Mammary epithelial cell (primary cell): ENCODE measurements at regions of chr16 and their contacts with region 1.

Region 1: GRCh38 chr16:22190776-22191531 is 15.1 kb upstream of the EEF2K start:
- DNase-seq: peak; percentile 99
- H3K4me3 ChIP-seq: peak overlapping the region; percentile 48 to 66 (median 56)
- H3K27ac ChIP-seq: peak overlapping the region; percentile 94
- H3K4me1 ChIP-seq: peaks cover 35% of the 10 kb centered on the region
- H3K27me3 ChIP-seq: no peaks in the 10 kb centered on the region
- CTCF ChIP-seq: no peak

Region 2: GRCh38 chr16:21656795-21657768 is 533.9 kb before region 1 on chr16:
- CTCF ChIA-PET with region 1: no interaction called
- dilution Hi-C with region 1: no loop called
- in situ Hi-C with region 1: no loop called
- intact Hi-C with region 1: loop called (anchors 10 kb)
- DNase-seq: peak; percentile 30
- H3K4me3 ChIP-seq: no peak overlapping the region
- H3K27ac ChIP-seq: no peak overlapping the region
- H3K4me1 ChIP-seq: peaks cover 23% of the 10 kb centered on the region
- H3K27me3 ChIP-seq: no peaks in the 10 kb centered on the region
- CTCF ChIP-seq: peak; percentile 69 to 85

Region 3: GRCh38 chr16:22001591-22001990 is 189.4 kb before region 1 on chr16:
- CTCF ChIA-PET with region 1: interaction called, 8 read pairs
- dilution Hi-C with region 1: loop called (anchors 5 kb)
- in situ Hi-C with region 1: loop called (anchors 5 to 10 kb)
- intact Hi-C with region 1: loop called (anchors 1 kb)
- DNase-seq: peak; percentile 70
- H3K4me3 ChIP-seq: no peak overlapping the region
- H3K27ac ChIP-seq: peak overlapping the region; percentile 51
- H3K4me1 ChIP-seq: peaks cover 33% of the 10 kb centered on the region
- H3K27me3 ChIP-seq: no peaks in the 10 kb centered on the region
- CTCF ChIP-seq: no peak

Region 4: DNA sequence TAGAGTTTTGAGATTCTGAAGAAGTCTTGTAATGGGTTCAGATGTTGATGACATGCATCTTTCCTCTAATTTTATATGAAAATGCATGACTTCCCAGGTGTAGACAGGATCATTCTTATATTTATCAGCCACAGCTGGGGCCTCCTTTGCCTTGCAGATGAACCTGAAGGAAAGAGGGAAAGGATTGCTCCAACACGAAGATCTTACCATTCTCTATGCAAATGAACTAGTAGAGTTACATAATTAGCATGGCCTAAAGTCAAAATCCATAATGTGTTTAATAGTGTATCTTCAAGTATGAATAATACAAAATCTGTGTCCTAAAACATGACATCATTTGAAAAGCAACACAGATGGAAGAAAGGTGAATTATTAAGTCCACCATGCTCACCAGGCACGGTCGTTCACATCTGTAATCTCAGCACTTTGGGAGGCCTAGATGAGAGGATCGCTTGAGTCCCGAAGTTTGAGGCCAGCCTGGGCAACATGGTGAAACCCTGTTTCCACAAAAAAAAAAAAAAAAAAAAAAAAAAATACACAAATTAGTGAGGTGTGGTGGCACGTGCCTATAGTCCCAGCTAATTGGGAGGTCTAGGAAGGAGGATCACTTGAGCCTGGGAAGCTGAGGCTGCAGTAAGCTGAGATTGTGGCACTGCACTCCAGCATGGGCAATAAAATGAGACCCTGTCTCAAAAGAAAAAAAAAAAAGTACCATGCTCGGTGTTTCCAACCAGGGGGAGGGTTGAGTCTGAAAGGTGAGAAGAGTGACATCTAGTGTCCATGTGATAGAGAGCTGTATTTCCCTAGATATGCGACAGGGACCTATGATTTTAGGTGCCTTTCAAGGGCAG is 92.3 kb before region 1 on chr16:
- CTCF ChIA-PET with region 1: interaction called, 12 read pairs
- dilution Hi-C with region 1: loop called (anchors 5 kb)
- in situ Hi-C with region 1: loop called in 1 of 2 experiments (anchors 5 kb)
- intact Hi-C with region 1: loop called (anchors 1 kb)
- DNase-seq: peak; percentile 42
- H3K4me3 ChIP-seq: peak overlapping the region in 1 of 3 experiments; percentile 15
- H3K27ac ChIP-seq: no peak overlapping the region
- H3K4me1 ChIP-seq: no peaks in the 10 kb centered on the region
- H3K27me3 ChIP-seq: no peaks in the 10 kb centered on the region
- CTCF ChIP-seq: peak; percentile 77 to 84

Region 5: GRCh38 chr16:22206013-22206841 is 15.3 kb after region 1 on chr16 and contains the start of gene EEF2K:
- CTCF ChIA-PET with region 1: no interaction called
- dilution Hi-C with region 1: no loop called
- in situ Hi-C with region 1: no loop called
- intact Hi-C with region 1: loop called (anchors 1 kb)
- DNase-seq: peak; percentile 94
- H3K4me3 ChIP-seq: peak within 1 kb of the TSS; percentile 88 to 99 (median 92)
- H3K27ac ChIP-seq: peak within 1 kb of the TSS; percentile 70
- H3K4me1 ChIP-seq: peaks cover 18% of the 10 kb centered on the region
- H3K27me3 ChIP-seq: no peaks in the 10 kb centered on the region
- CTCF ChIP-seq: peak; percentile 49 to 71
- total RNA-seq, gene EEF2K: 16.0 to 22.8 TPM

Region 6: DNA sequence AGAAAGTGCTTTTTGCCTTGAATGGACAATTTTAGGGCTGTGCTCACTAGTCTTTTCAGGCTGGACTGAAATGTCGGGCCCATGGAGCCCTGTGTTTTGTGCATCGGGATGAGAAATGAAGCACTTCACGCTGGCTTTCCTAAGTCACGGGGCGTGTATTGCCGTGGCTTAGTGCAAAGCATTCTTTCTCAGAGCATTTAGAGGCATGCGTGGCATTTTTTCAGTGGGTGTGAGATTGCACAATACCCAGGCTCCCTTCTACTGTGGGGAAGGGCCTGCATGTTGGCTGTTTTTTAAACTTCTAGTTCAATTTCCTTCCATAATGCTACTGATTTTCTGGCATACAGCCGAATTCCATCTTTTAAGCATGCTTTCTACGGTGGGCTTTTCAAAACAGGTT is 93.7 kb after region 1 on chr16:
- CTCF ChIA-PET with region 1: no interaction called
- dilution Hi-C with region 1: no loop called
- in situ Hi-C with region 1: no loop called
- intact Hi-C with region 1: no loop called
- DNase-seq: no peak
- H3K4me3 ChIP-seq: no peak overlapping the region
- H3K27ac ChIP-seq: no peak overlapping the region
- H3K4me1 ChIP-seq: no peaks in the 10 kb centered on the region
- H3K27me3 ChIP-seq: no peaks in the 10 kb centered on the region
- CTCF ChIP-seq: no peak

Region 7: GRCh38 chr16:22297114-22297878 is 106.3 kb after region 1 on chr16 and contains the start of gene POLR3E:
- CTCF ChIA-PET with region 1: interaction called, 3 read pairs
- dilution Hi-C with region 1: no loop called
- in situ Hi-C with region 1: loop called in 1 of 2 experiments (anchors 5 kb)
- intact Hi-C with region 1: loop called (anchors 1 kb)
- DNase-seq: peak; percentile 98
- H3K4me3 ChIP-seq: peak within 1 kb of the TSS; percentile 96 to 100 (median 97)
- H3K27ac ChIP-seq: peak within 1 kb of the TSS; percentile 95
- H3K4me1 ChIP-seq: peaks cover 15% of the 10 kb centered on the region
- H3K27me3 ChIP-seq: no peaks in the 10 kb centered on the region
- CTCF ChIP-seq: peak; percentile 76 to 93
- total RNA-seq, gene POLR3E: 22.7 to 41.1 TPM